Esophagus squamous epithelium (tissue), 5 donors: ENCODE measurements at regions of chr16 and their contacts with region 1.

Region 1: GRCh38 chr16:88605186-88606147 is 32.9 kb upstream of the IL17C start:
- DNase-seq: no peak
- H3K4me3 ChIP-seq: no peak overlapping the region
- H3K27ac ChIP-seq: no peak overlapping the region
- H3K4me1 ChIP-seq: peaks cover under 1 to 22% (median 4%) of the 10 kb centered on the region in 3 donors
- H3K27me3 ChIP-seq: no peaks in the 10 kb centered on the region
- CTCF ChIP-seq: no peak
- POLR2A ChIP-seq: no peak

Region 2: DNA sequence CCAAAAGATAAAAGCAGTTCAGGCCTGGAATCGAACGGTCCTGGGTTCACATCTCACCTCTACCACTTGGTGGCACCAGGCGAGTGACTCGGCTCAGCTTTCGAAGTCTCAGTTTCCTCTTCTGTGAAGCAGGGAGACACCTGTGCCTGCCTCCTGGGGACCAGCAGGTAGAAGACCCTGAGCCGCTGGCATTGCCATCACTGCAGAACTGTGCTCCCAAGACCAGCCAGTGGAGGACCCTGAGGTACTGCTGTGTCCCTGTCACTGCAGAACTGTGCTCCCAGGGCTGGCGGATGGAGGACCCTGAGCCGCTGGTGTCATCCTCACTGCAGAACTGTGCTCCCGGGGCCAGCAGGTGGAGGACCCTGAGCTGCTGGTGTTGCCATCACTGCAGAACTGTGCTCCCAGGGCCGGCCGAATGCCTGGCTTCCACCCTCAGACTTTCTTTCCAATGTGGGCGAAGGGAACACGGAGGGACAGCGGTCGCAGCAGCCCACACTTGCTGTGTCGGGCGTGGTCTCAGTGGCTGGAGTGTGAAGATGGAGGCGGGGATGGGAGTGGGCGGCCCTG is 727.4 kb before region 1 on chr16:
- intact Hi-C with region 1: no loop called
- DNase-seq: no peak
- H3K4me3 ChIP-seq: no peak overlapping the region
- H3K27ac ChIP-seq: no peak overlapping the region
- H3K4me1 ChIP-seq: no peaks in the 10 kb centered on the region
- H3K27me3 ChIP-seq: peaks cover 0 to 72% (median 0%) of the 10 kb centered on the region in 4 donors
- CTCF ChIP-seq: peak in 1 of 6 experiments; percentile 36
- POLR2A ChIP-seq: no peak

Region 3: GRCh38 chr16:88633684-88634140 is 28.2 kb after region 1 on chr16:
- intact Hi-C with region 1: loop called (anchors 2 kb)
- DNase-seq: no peak
- H3K4me3 ChIP-seq: peak overlapping the region; percentile 25 to 59 (median 41)
- H3K27ac ChIP-seq: peak overlapping the region in 3 of 4 donors; percentile 14 to 54 (median 49)
- H3K4me1 ChIP-seq: peaks cover 15 to 30% (median 19%) of the 10 kb centered on the region in 3 donors
- H3K27me3 ChIP-seq: peaks cover 4 to 55% (median 9%) of the 10 kb centered on the region in 4 donors
- CTCF ChIP-seq: peak in 1 of 6 experiments; percentile 18
- POLR2A ChIP-seq: no peak